PC-3 (cell line): ENCODE measurements at regions of chr3 and their contacts with region 1.

Region 1: GRCh38 chr3:112582244-112582874 is 20.5 kb downstream of the SLC35A5 start:
- DNase-seq: peak; percentile 73
- ATAC-seq: peak; percentile 77
- H3K4me3 ChIP-seq: no peak overlapping the region
- H3K27ac ChIP-seq: no peak overlapping the region
- H3K4me1 ChIP-seq: peaks cover 3% of the 10 kb centered on the region; the same call in 1 of the 2 replicates
- H3K27me3 ChIP-seq: no peaks in the 10 kb centered on the region
- CTCF ChIP-seq: peak; percentile 91

Region 2: GRCh38 chr3:112629425-112629824 is 47.1 kb after region 1 on chr3:
- CTCF ChIA-PET with region 1: no interaction called
- POLR2A ChIA-PET with region 1: no interaction called
- intact Hi-C with region 1: loop called (anchors 1 kb)
- DNase-seq: peak; percentile 80
- ATAC-seq: peak; percentile 98
- H3K4me3 ChIP-seq: no peak overlapping the region
- H3K27ac ChIP-seq: no peak overlapping the region
- H3K4me1 ChIP-seq: peaks cover 26% of the 10 kb centered on the region
- H3K27me3 ChIP-seq: no peaks in the 10 kb centered on the region
- CTCF ChIP-seq: no peak

Region 3: GRCh38 chr3:112699436-112699978 is 117.1 kb after region 1 on chr3:
- CTCF ChIA-PET with region 1: no interaction called
- POLR2A ChIA-PET with region 1: no interaction called
- intact Hi-C with region 1: loop called (anchors 1 kb)
- DNase-seq: peak; percentile 94
- ATAC-seq: peak; percentile 86
- H3K4me3 ChIP-seq: no peak overlapping the region
- H3K27ac ChIP-seq: peak overlapping the region; percentile 41
- H3K4me1 ChIP-seq: peaks cover 10% of the 10 kb centered on the region
- H3K27me3 ChIP-seq: no peaks in the 10 kb centered on the region
- CTCF ChIP-seq: peak; percentile 58

Region 4: DNA sequence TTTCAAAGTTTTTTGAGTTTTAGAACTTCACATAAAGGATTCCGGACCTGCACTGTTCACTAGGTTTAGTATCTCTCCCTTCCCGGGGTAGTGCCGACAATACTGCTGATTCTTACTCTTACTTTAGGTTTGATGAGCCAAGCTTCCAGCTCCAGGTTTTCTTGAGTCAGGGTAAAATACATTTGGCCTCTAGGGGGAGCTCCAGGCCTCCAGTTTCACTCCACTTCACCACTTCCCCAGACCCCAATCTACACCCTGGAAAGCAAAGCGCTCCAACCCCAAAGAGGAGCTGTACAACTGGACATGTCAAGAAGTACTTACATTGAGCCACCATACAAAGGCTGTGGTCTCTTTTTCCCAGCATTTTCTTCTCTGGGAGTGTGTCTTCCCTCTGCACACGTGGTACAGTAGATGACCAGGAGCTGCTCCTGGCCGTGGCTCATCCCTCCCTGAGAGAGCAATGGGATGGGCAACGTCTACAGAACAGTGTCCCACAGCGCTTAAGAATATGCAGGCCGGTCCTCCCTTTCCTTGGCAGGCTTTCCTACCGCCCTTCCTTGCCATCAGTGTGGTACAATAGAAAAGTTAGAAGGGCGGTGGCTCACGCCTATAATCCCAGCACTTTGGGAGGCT is 152.5 kb after region 1 on chr3:
- CTCF ChIA-PET with region 1: no interaction called
- POLR2A ChIA-PET with region 1: no interaction called
- intact Hi-C with region 1: loop called (anchors 1 kb)
- DNase-seq: peak; percentile 89
- ATAC-seq: peak; percentile 71
- H3K4me3 ChIP-seq: no peak overlapping the region
- H3K27ac ChIP-seq: no peak overlapping the region
- H3K4me1 ChIP-seq: peaks cover 33% of the 10 kb centered on the region
- H3K27me3 ChIP-seq: no peaks in the 10 kb centered on the region
- CTCF ChIP-seq: peak; percentile 92

Region 5: DNA sequence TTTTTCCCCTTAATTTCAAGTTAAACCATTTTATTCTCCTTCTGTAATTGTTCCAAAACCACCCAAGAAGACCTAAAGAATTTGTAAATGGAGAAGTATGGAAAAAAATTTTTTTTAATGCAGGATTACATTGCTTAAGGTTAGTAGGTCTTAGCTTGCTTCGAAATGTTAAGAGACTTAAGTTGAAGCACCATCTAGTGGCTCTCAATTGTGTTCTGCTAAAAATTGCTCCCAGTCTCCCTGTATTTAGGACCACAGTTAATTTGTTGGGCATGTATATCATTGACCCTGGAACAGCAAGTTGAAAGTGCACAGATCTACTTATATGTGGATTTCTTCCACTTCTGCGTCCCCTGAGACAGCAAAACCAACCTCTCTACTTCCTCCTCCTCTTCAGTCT is 231.9 kb after region 1 on chr3:
- CTCF ChIA-PET with region 1: no interaction called
- POLR2A ChIA-PET with region 1: interaction called, 5 read pairs
- intact Hi-C with region 1: loop called (anchors 1 kb)
- DNase-seq: peak; percentile 77
- ATAC-seq: peak; percentile 78
- H3K4me3 ChIP-seq: no peak overlapping the region
- H3K27ac ChIP-seq: no peak overlapping the region
- H3K4me1 ChIP-seq: peaks cover 19% of the 10 kb centered on the region
- H3K27me3 ChIP-seq: no peaks in the 10 kb centered on the region
- CTCF ChIP-seq: peak; percentile 81

Region 6: DNA sequence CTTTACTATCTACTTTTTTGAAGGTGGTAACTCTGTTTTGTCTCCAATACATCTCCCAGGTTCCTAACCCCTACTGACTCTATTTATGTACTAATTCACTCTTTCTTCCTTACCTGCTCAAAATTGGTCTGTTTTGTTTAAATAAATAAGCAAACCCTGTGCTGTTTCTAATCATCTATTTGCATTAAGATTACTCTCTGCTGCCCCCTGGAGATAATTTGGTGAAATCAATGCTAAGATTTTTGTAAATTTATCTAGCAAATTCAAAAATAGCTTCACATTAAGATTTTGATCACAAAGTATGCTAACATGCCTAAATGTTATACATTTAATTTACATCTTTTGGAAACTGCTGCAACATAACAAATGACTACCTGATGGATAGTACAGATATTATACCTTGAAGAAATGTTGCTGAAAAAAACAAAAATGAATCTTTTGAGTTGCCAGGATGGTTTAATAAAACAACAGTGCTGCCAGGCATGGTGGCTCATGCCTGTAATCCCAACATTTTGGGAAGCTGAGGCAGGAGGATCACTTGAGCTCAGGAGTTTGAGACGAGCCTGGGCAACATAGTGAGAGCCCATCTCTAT is 397.0 kb after region 1 on chr3:
- CTCF ChIA-PET with region 1: no interaction called
- POLR2A ChIA-PET with region 1: no interaction called
- intact Hi-C with region 1: loop called (anchors 1 kb)
- DNase-seq: peak; percentile 62
- ATAC-seq: no peak; the same call in 1 of the 2 replicates
- H3K4me3 ChIP-seq: no peak overlapping the region
- H3K27ac ChIP-seq: no peak overlapping the region
- H3K4me1 ChIP-seq: peaks cover 2% of the 10 kb centered on the region
- H3K27me3 ChIP-seq: no peaks in the 10 kb centered on the region
- CTCF ChIP-seq: peak; percentile 87